ENCODE measurements at regions of chr16 and their contacts with region 1.

Region 1: DNA sequence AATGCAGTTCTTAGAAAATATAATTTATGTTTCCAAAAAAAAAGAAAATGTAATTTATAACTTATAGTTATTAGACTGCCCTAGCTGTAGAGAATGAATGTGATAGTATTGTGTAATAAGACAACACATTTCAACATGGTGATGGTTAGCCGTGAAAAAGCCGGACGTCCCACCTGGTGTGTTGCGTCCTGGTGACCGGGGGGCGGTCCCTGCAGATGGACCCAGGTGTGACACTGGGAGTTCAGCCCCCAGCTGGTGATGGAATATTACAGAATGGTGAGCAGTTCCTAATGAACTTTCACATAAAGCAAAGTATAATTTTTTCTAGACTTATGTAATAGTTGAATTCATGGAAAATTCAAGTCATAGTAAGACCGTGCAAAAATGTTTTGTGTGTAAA is 132.8 kb downstream of the LAT start:
- DNase-seq: no peak
- ATAC-seq: no peak
- H3K4me3 ChIP-seq: no peak overlapping the region
- H3K4me3 Mint-ChIP-seq: no peak overlapping the region
- H3K27ac ChIP-seq: no peak overlapping the region
- H3K27ac Mint-ChIP-seq: peak overlapping the region; percentile 87
- H3K4me1 ChIP-seq: peaks cover 19% of the 10 kb centered on the region
- H3K4me1 Mint-ChIP-seq: peaks cover 32% of the 10 kb centered on the region
- H3K27me3 ChIP-seq: no peaks in the 10 kb centered on the region
- H3K27me3 Mint-ChIP-seq: no peaks in the 10 kb centered on the region
- CTCF ChIP-seq: no peak

Region 2: DNA sequence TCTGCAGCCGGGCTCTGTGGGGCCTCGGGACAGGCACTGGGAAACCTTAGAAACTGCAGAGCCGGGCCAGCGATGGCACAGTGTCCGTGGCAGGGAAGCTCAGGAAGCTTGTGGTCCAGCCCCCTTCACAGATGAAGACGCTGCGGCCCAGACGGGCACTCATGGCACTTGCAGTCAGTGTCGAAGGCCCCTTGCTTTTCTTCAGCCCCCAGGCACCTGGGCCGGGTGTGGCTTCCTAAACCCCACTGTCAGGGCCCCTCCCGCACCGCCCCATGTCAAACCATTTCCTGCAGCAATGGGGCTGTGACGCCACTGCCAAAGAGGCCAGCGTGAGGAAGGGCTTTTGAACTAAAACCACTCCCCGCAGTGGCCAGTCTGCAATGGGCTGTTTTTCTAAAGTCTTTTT is 31.2 kb after region 1 on chr16:
- CTCF ChIA-PET with region 1: no interaction called
- POLR2A ChIA-PET with region 1: no interaction called
- intact Hi-C with region 1: loop called in 1 of 2 experiments (anchors 2 kb)
- DNase-seq: peak; percentile 72 to 95 (median 89)
- ATAC-seq: peak; percentile 90
- H3K4me3 ChIP-seq: peak overlapping the region in 1 of 2 experiments; percentile 13
- H3K4me3 Mint-ChIP-seq: peak overlapping the region; percentile 54
- H3K27ac ChIP-seq: peak overlapping the region; percentile 54 to 81
- H3K27ac Mint-ChIP-seq: peak overlapping the region; percentile 98
- H3K4me1 ChIP-seq: peaks cover 44% of the 10 kb centered on the region
- H3K4me1 Mint-ChIP-seq: peaks cover 51% of the 10 kb centered on the region
- H3K27me3 ChIP-seq: no peaks in the 10 kb centered on the region
- H3K27me3 Mint-ChIP-seq: no peaks in the 10 kb centered on the region
- CTCF ChIP-seq: no peak

Measured in CD8-positive, alpha-beta T cell (primary cell).